Activated CD4-positive, alpha-beta T cell treated with anti-CD3 and anti-CD28 coated beads, Interleukin-2, amount 10 ng/mL, durations not matched to agents 7 days and 5 days (primary cell): ENCODE measurements at regions of chr2 and their contacts with region 1.

Region 1: DNA sequence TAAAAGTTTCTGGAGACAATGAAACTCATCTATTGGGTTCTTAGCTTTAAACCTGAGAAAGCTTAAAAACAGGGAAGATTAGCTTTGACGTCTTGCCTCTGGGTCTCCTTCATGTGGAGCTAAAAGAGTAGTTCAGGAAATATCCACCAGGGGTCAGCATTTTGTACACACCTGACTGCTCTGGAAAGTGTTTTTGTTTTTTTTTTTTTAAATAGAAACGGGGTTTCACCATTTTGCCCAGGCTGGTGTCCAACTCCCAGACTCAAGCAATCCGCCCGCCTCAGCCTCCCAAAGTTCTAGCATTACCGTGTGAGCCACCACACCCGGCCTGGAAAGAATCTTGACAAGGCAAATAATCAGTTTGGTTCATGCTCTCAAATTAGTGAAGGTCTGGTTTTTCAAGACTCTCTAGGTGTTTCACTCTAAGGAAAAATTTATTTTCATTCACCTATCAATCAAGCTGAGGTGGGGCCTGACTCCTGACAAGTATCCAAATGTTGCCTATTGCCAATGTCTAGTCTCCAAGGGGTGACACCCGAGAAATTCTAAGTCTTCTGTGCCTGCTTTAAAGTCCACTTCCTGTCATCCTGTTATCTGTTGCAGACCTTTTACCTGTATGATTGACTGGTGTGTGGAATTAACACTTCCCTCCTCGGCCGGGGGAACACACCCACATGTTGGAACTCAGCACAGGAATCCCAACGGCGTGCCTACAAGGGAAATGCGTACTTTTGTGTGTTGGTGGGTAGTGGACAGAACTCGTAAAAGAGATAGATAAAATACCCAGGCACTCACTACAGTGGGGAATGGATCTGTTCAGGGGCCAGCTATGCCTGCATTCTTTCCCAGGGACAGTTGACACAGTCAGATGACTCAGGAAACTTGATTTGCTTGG is 11.3 kb downstream of the IL1RN start:
- DNase-seq: peak; percentile 84
- H3K4me3 Mint-ChIP-seq: peak overlapping the region; percentile 21
- H3K27ac Mint-ChIP-seq: peak overlapping the region; percentile 77
- H3K4me1 Mint-ChIP-seq: peaks cover 29% of the 10 kb centered on the region
- H3K27me3 Mint-ChIP-seq: peaks cover 2% of the 10 kb centered on the region

Region 2: GRCh38 chr2:112947374-112947773 is 191.3 kb before region 1 on chr2:
- CTCF ChIA-PET with region 1: no interaction called
- POLR2A ChIA-PET with region 1: no interaction called
- DNase-seq: no peak
- H3K4me3 Mint-ChIP-seq: no peak overlapping the region
- H3K27ac Mint-ChIP-seq: no peak overlapping the region
- H3K4me1 Mint-ChIP-seq: no peaks in the 10 kb centered on the region
- H3K27me3 Mint-ChIP-seq: peaks cover 28% of the 10 kb centered on the region

Region 3: GRCh38 chr2:113080134-113080533 is 58.5 kb before region 1 on chr2:
- CTCF ChIA-PET with region 1: interaction called, 30 read pairs
- POLR2A ChIA-PET with region 1: no interaction called
- DNase-seq: peak; percentile 59
- H3K4me3 Mint-ChIP-seq: no peak overlapping the region
- H3K27ac Mint-ChIP-seq: no peak overlapping the region
- H3K4me1 Mint-ChIP-seq: peaks cover 2% of the 10 kb centered on the region
- H3K27me3 Mint-ChIP-seq: peaks cover 16% of the 10 kb centered on the region

Region 4: GRCh38 chr2:113157118-113157896 is 18.6 kb after region 1 on chr2:
- CTCF ChIA-PET with region 1: interaction called, 17 read pairs
- POLR2A ChIA-PET with region 1: no interaction called
- DNase-seq: peak; percentile 55
- H3K4me3 Mint-ChIP-seq: peak overlapping the region; percentile 86
- H3K27ac Mint-ChIP-seq: peak overlapping the region; percentile 90
- H3K4me1 Mint-ChIP-seq: peaks cover 26% of the 10 kb centered on the region
- H3K27me3 Mint-ChIP-seq: peaks cover 6% of the 10 kb centered on the region

Region 5: GRCh38 chr2:113173542-113174395 is 35.1 kb after region 1 on chr2 and contains the start of gene PSD4:
- CTCF ChIA-PET with region 1: interaction called, 40 read pairs
- POLR2A ChIA-PET with region 1: interaction called, 7 read pairs
- DNase-seq: peak; percentile 94
- H3K4me3 Mint-ChIP-seq: peak within 1 kb of the TSS; percentile 84
- H3K27ac Mint-ChIP-seq: peak within 1 kb of the TSS; percentile 88
- H3K4me1 Mint-ChIP-seq: peaks cover 73% of the 10 kb centered on the region
- H3K27me3 Mint-ChIP-seq: peaks cover 2% of the 10 kb centered on the region
- total RNA-seq, gene PSD4: 329 to 335 TPM

Region 6: DNA sequence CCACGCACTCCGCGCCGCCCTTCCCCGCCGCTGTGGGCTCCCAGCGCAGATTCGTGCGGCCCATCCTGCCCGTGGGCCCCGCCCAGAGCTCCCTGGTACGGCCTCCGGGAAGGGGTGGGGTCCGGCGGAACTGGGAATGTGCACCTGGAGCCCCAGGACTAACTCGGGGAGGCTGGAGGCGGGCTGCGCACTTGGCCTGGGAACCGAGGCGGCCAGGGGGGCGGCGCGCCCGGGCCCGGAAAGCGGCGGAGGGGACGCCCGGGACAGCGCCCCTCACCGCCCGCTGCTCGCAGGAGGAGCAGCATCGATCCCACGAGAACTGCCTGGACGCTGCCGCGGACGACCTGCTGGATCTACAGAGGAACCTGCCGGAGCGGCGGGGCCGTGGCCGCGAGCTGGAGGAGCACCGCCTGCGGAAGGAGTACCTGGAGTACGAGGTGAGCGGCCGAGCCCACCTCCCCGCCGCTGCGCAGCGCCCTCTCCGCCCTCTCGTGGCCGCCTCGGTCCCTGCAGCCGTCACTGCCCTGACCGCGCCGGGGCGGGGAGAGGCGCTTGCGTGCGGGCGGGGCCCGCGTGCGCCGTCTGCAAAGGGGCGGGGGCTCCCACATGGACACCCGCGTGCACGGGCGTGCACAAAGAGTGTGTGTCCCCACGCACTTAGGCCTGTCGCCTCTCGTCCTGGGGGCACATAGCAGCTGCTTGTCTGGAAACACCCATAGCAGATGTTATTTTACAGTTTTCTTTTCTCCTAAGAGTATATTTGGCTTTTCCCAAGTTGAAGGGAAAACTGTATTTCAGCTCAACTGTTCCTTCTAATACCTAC is 60.3 kb after region 1 on chr2:
- CTCF ChIA-PET with region 1: interaction called, 51 read pairs
- POLR2A ChIA-PET with region 1: interaction called, 3 read pairs
- DNase-seq: peak; percentile 75
- H3K4me3 Mint-ChIP-seq: no peak overlapping the region
- H3K27ac Mint-ChIP-seq: no peak overlapping the region
- H3K4me1 Mint-ChIP-seq: peaks cover 27% of the 10 kb centered on the region
- H3K27me3 Mint-ChIP-seq: no peaks in the 10 kb centered on the region

Region 7: DNA sequence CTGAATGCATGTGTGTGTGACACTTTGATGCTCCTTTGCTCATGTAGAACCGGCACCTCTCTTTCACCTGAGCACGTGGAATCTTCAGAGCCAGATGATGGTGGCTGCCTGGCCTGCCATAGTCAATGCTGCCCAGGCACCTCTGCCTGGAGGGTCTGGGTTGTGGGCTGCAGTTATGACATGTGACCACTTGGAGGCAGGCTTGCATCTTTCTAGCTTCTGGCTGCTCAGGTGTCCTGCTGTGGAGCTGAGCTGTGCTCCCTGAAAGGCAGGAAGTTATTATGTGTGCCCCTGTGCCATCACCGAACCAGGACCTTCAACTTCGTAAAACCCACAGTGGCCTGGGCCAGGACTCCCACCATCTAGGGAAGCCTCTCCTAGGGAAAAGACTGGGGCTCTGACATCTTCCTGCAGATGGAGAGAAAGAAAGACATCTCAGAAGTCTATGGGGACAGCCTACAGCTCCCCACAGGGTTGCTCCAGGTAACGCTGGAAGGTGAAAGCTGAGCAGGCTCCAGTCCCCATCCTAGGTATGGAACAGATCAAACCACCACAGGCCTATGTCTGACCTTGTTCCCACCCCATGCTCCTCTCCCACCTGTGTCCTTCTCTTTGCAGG is 65.3 kb after region 1 on chr2:
- CTCF ChIA-PET with region 1: interaction called, 51 read pairs
- POLR2A ChIA-PET with region 1: interaction called, 3 read pairs
- DNase-seq: peak; percentile 80
- H3K4me3 Mint-ChIP-seq: no peak overlapping the region
- H3K27ac Mint-ChIP-seq: peak overlapping the region; percentile 65
- H3K4me1 Mint-ChIP-seq: peaks cover 12% of the 10 kb centered on the region
- H3K27me3 Mint-ChIP-seq: no peaks in the 10 kb centered on the region

Region 8: GRCh38 chr2:113390124-113390849 is 251.6 kb after region 1 on chr2:
- CTCF ChIA-PET with region 1: interaction called, 21 read pairs
- POLR2A ChIA-PET with region 1: no interaction called
- DNase-seq: peak; percentile 79
- H3K4me3 Mint-ChIP-seq: peak overlapping the region; percentile 68
- H3K27ac Mint-ChIP-seq: peak overlapping the region; percentile 86
- H3K4me1 Mint-ChIP-seq: peaks cover 14% of the 10 kb centered on the region
- H3K27me3 Mint-ChIP-seq: peaks cover 18% of the 10 kb centered on the region